ENCODE measurements at regions of chr16 and their contacts with region 1.

Region 1: GRCh38 chr16:3879887-3880564 is 487 bp downstream of the CREBBP start:
- DNase-seq: no peak
- H3K4me3 ChIP-seq: peak overlapping the region; percentile 94
- CTCF ChIP-seq: no peak

Region 2: DNA sequence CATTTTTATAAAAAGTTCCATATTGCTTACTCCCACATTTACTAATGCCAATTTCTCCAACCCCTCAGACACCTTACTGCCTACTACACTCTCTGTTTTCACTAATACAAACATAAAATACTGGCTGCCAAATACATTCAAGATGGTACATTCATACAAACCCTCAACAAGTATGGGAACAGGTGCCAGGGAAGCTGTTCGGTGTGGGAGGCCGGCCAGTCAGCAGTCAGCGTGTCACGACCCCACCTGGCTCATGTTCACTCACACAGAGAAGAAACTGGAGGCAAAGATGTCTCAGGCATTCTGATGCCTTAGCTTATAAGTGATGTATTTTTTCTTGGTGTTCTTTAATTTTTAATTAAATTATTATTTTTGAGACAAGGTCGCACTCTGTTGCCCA is 120.3 kb before region 1 on chr16:
- in situ Hi-C with region 1: loop called (anchors 5 kb)
- DNase-seq: no peak
- H3K4me3 ChIP-seq: no peak overlapping the region
- CTCF ChIP-seq: no peak

Region 3: DNA sequence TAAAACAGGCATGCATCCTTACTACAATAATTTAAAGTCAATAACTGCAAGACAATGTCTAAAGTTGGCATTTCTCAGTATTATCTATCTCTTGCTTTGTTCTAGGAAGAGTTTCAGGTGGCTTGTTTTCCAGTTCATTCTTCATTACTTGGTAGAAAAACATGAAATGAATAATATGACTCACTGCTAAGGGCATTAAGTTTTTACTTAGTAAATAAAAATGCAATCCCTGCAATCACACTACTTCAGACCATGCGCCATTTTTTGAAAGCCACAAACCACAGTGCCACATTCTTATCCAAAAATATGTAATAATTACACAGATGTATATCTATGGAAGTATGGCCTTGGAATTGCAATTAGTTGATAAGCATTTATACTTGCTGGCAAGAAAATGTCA is 54.9 kb before region 1 on chr16:
- in situ Hi-C with region 1: loop called (anchors 5 kb)
- DNase-seq: peak; percentile 62
- H3K4me3 ChIP-seq: no peak overlapping the region
- CTCF ChIP-seq: no peak

Region 4: GRCh38 chr16:3915426-3916215 is 35.6 kb after region 1 on chr16:
- in situ Hi-C with region 1: loop called (anchors 5 kb)
- DNase-seq: no peak
- H3K4me3 ChIP-seq: no peak overlapping the region
- CTCF ChIP-seq: no peak

Region 5: GRCh38 chr16:3938848-3939624 is 59.0 kb after region 1 on chr16:
- in situ Hi-C with region 1: no loop called
- DNase-seq: peak; percentile 88
- H3K4me3 ChIP-seq: peak overlapping the region; percentile 26
- CTCF ChIP-seq: peak; percentile 95

Region 6: GRCh38 chr16:3961449-3961849 is 81.4 kb after region 1 on chr16:
- in situ Hi-C with region 1: no loop called
- DNase-seq: no peak
- H3K4me3 ChIP-seq: peak overlapping the region; percentile 30
- CTCF ChIP-seq: no peak

Region 7: DNA sequence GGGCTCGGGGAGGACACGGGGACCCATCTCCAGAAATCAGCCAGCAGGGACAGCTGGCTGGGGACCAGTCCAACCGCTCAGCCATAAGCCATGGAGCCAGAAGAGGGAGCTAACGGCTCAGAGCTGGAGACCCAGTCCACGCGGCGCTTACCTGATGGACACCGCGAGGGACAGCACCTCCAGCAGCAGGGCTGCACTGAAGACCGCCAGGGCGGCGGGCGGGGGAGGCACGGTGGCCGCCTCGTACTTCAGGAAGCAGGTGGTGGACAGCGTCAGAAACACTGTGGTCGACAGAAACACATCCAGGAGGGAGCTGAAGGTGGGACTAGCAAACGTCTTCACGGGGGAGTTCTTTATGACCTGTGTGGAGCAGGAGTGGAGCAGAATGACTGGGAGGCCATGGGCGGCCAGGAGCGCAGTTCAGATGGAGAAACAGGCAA is 103.1 kb after region 1 on chr16:
- in situ Hi-C with region 1: no loop called
- DNase-seq: peak; percentile 53
- H3K4me3 ChIP-seq: no peak overlapping the region
- CTCF ChIP-seq: peak; percentile 80

Region 8: GRCh38 chr16:4293822-4294457 is 413.9 kb after region 1 on chr16:
- in situ Hi-C with region 1: loop called (anchors 10 kb)
- DNase-seq: no peak
- H3K4me3 ChIP-seq: no peak overlapping the region
- CTCF ChIP-seq: no peak